RWPE1 (cell line): ENCODE measurements at regions of chr3 and their contacts with region 1.

Region 1: GRCh38 chr3:195119461-195120198 is 151.3 kb downstream of the XXYLT1 start:
- DNase-seq: peak; percentile 46
- H3K27ac ChIP-seq: peak overlapping the region; percentile 20; the same call in 1 of the 2 replicates
- CTCF ChIP-seq: no peak

Region 2: DNA sequence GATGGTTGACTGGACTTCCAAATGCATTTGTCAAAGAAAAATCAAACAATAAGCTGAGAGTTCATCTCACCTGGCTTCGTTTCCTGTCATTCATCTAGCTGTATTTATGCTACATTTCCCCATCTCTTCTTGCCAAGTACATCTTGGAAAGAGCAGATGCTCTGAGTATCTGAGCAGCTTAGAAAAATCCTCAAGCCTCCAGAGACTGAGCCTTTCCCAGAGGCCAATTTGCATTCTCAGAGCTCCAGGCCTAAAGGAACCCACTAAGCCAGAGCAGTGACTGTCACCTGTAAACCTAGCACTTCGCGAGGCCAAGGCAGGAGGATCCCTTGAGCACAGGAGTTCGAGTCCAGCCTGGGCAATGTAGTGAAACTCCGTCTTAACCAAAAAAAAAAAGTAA is 50.9 kb after region 1 on chr3:
- CTCF ChIA-PET with region 1: no interaction called
- POLR2A ChIA-PET with region 1: no interaction called
- DNase-seq: no peak
- H3K27ac ChIP-seq: no peak overlapping the region
- CTCF ChIP-seq: no peak

Region 3: DNA sequence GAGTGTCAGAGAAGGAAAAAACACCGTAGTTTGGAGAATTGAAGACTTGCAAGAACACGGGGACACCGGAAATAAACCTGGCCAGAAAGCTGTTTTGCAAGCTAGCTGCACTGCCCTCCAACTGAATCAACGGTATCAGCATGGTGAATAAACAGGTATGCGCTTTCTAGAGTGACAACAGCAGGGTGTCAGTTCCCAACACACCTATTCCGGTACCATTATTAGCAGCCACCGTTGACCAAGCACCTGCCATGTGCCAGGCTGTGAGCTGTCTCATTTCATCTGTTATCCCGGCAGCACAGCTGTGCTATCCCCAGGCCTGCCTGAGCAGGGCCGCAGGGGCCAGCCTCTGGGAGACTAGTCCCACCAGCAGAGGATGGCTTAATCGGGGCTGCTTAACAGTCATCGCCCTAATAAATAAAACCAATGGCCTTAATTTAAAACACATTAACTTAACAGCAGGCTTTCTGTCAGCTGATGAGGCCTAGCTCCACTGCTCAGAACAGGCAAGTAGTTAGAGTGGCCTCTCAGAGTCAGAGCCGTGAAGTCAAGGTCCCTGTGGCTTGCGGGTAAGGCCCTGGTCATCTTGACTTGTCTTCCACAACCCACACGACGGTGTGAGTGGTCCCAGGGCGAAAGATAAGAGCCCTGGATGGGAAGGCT is 139.3 kb after region 1 on chr3:
- CTCF ChIA-PET with region 1: interaction called, 10 read pairs
- POLR2A ChIA-PET with region 1: no interaction called
- DNase-seq: no peak
- H3K27ac ChIP-seq: peak overlapping the region; percentile 83
- CTCF ChIP-seq: no peak